ENCODE measurements at regions of chr1 and their contacts with region 1.

Region 1: GRCh38 chr1:206106328-206107167 is 10.6 kb downstream of the AVPR1B start:
- DNase-seq: peak; percentile 72
- H3K4me3 ChIP-seq: no peak overlapping the region
- H3K27ac ChIP-seq: no peak overlapping the region
- H3K4me1 ChIP-seq: no peaks in the 10 kb centered on the region
- H3K27me3 ChIP-seq: no peaks in the 10 kb centered on the region
- CTCF ChIP-seq: peak; percentile 89

Region 2: GRCh38 chr1:205983925-205984725 is 122.4 kb before region 1 on chr1:
- intact Hi-C with region 1: loop called (anchors 5 kb)
- DNase-seq: peak; percentile 71
- H3K4me3 ChIP-seq: no peak overlapping the region
- H3K27ac ChIP-seq: no peak overlapping the region
- H3K4me1 ChIP-seq: peaks cover 39% of the 10 kb centered on the region
- H3K27me3 ChIP-seq: no peaks in the 10 kb centered on the region
- CTCF ChIP-seq: peak; percentile 84

Region 3: DNA sequence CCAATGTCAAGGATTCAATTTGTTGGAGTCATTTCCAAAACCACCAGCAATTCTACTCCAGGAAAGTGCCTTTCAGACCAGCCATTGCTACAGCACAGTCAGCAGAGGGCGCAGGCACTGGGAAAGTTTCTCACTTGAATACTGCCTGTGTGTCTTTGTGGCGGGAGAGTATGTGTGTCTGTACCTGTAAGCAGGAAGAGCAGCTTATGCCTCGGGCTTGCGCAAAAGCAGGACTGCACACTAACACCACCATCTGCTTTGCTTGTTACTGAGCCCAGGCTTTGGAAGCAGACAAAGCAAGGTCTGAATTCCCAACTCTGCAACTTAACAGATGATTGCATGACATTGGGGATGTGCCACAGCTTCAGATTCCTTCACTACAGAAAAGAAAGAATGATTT is 75.8 kb before region 1 on chr1:
- intact Hi-C with region 1: loop called (anchors 10 kb)
- DNase-seq: peak; percentile 34
- H3K4me3 ChIP-seq: no peak overlapping the region
- H3K27ac ChIP-seq: no peak overlapping the region
- H3K4me1 ChIP-seq: no peaks in the 10 kb centered on the region
- H3K27me3 ChIP-seq: peaks cover 34% of the 10 kb centered on the region
- CTCF ChIP-seq: peak; percentile 79

Measured in left ventricle myocardium inferior (tissue), 1 donor.